ENCODE measurements at regions of chr11 and their contacts with region 1.

Region 1: GRCh38 chr11:31240338-31240904 is 129.1 kb downstream of the DCDC1 start:
- DNase-seq: peak; percentile 59
- ATAC-seq: peak; percentile 80
- H3K4me3 ChIP-seq: no peak overlapping the region
- H3K27ac ChIP-seq: no peak overlapping the region
- H3K4me1 ChIP-seq: no peaks in the 10 kb centered on the region
- H3K27me3 ChIP-seq: no peaks in the 10 kb centered on the region
- CTCF ChIP-seq: peak; percentile 48 to 72 (median 62); a peak in 5 of 6 replicates
- POLR2A ChIP-seq: no peak
- RAD21 ChIP-seq: peak; percentile 72

Region 2: DNA sequence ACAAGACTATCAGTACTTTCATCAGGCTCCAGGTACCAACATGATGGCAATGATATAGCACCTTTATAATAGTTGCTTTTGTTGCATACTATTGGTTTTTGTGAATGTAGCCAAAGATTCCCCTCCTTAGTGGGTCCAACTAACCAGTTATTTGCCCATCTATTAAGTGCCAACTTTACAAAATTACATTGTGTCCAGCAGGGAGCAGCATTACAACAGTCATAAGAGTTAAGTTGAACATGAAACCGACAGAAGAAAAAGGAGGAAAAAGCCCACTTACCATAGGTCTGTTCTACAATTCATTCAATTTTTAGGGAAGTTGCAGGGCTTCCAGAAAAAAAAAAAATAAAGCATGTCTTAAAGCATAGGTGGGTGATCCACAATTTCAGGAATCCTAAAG is 247.4 kb after region 1 on chr11:
- CTCF ChIA-PET with region 1: no interaction called
- POLR2A ChIA-PET with region 1: no interaction called
- RAD21 ChIA-PET with region 1: no interaction called
- intact Hi-C with region 1: loop called (anchors 10 kb)
- DNase-seq: peak; percentile 44
- ATAC-seq: peak; percentile 55
- H3K4me3 ChIP-seq: no peak overlapping the region
- H3K27ac ChIP-seq: no peak overlapping the region
- H3K4me1 ChIP-seq: no peaks in the 10 kb centered on the region
- H3K27me3 ChIP-seq: no peaks in the 10 kb centered on the region
- CTCF ChIP-seq: peak; percentile 39 to 63 (median 40); a peak in 5 of 6 replicates
- POLR2A ChIP-seq: no peak
- RAD21 ChIP-seq: peak; percentile 58

Region 3: DNA sequence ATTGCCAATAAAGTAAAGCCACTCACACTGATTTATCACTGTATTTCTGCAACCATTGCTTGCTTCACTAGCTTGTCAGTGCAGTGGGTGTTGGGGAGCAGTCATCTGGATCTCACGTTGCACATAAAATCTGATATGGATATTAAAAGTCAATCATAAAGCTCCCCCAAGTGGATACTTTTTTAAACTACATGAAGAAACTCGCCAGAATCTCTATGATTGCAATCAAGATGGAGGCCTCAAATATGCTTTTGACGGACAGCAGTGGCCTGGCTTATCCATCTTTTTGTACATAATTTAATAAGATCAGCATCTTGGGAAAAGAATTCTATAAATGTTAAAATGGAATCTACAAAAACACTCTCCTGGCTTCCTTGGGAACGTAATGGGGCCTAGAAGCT is 1057.2 kb after region 1 on chr11:
- CTCF ChIA-PET with region 1: interaction called, 7 read pairs
- POLR2A ChIA-PET with region 1: no interaction called
- RAD21 ChIA-PET with region 1: no interaction called
- intact Hi-C with region 1: loop called (anchors 2 kb)
- DNase-seq: peak; percentile 31
- ATAC-seq: peak; percentile 84
- H3K4me3 ChIP-seq: no peak overlapping the region
- H3K27ac ChIP-seq: no peak overlapping the region
- H3K4me1 ChIP-seq: no peaks in the 10 kb centered on the region
- H3K27me3 ChIP-seq: no peaks in the 10 kb centered on the region
- CTCF ChIP-seq: peak; percentile 26 to 58 (median 53); a peak in 4 of 6 replicates
- POLR2A ChIP-seq: no peak
- RAD21 ChIP-seq: peak; percentile 69